ENCODE measurements at regions of chr12 and their contacts with region 1.

Region 1: GRCh38 chr12:20798561-20798960 is 11.9 kb upstream of the SLCO1B3 start:
- DNase-seq: no peak
- ATAC-seq: peak; percentile 48
- H3K4me3 ChIP-seq: no peak overlapping the region
- H3K27ac ChIP-seq: no peak overlapping the region
- H3K4me1 ChIP-seq: peaks cover 0 to 3% of the 10 kb centered on the region in 2 donors
- H3K27me3 ChIP-seq: no peaks in the 10 kb centered on the region

Region 2: DNA sequence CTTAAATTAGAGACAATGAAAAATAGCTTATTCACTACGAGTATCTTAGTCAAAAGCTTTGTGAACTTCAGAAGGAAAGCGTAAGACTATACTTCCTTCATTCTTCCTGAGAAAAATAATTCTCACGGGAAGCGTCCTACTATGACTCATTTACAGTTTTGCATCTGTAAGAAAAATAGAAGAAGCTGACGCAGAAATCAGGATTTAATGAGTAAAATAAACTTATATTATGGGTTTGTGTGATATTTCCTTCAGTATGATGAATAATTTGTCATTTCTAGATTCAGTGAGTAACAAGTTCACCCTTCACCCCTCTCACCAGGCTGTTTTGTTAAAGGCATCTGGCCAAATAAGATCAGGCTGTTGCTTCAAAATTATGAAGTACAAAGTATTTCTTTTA is 448.1 kb before region 1 on chr12:
- intact Hi-C with region 1: no loop called
- DNase-seq: no peak
- ATAC-seq: peak; percentile 52
- H3K4me3 ChIP-seq: no peak overlapping the region
- H3K27ac ChIP-seq: no peak overlapping the region
- H3K4me1 ChIP-seq: peaks cover 0 to 5% of the 10 kb centered on the region in 2 donors
- H3K27me3 ChIP-seq: no peaks in the 10 kb centered on the region

Region 3: GRCh38 chr12:20557096-20557495 is 241.5 kb before region 1 on chr12:
- intact Hi-C with region 1: loop called in 1 of 2 experiments (anchors 5 kb)
- DNase-seq: no peak
- ATAC-seq: no peak
- H3K4me3 ChIP-seq: no peak overlapping the region
- H3K27ac ChIP-seq: no peak overlapping the region
- H3K4me1 ChIP-seq: no peaks in the 10 kb centered on the region
- H3K27me3 ChIP-seq: no peaks in the 10 kb centered on the region

Measured in aorta (tissue), 5 donors.